H1 (cell line): ENCODE measurements at regions of chr1 and their contacts with region 1.

Region 1: DNA sequence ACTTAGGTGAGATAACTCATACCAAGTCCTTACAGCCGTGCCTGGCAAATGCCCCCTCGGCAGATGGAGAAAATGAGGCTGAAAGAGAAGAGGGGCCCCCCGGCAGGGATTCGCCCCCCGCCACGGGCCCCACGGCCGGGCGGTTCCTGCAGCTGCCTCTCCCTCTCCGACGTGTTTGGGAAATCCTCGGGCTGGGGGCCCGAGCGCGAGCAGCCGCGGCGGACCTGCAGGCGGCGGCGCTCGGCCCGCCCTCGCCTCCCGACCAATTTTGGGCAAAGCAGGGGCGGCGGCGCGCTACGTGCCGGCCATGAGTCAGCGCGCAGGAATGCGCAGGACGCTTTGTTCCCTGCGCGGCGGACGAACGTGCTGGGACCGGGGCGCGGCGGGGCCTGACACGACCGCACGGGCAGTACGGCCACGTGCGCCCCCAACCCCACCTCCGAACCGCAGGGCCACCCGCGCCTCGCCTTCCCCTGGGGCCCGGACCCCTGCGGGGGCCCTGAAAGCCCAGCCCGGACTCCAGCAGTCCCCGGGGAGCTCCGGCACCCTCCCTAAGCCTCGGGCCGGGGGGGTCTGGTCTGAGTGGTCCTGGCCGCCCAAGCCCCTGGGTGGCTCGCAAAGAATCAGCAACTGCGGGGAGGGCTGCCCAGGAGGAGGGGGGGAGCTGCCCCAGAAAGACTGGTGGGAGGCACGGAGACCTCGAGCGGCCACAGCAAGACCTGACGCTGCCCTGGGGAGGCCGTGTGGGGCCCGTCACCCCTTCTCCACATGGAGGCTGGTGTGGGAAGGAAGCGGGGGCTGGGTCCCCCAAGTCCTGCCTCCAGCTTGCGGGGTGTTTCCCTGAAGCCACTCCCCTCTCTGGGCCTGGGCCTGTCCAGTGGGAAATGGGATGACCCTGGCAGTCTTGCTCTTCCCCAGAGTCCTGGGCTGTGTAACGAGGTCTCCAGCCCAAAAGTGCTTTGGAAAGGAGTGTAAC is 11.9 kb upstream of the EDN2 start:
- DNase-seq: peak; percentile 69 to 88
- H3K4me3 ChIP-seq: peak overlapping the region; percentile 6 to 51 (median 24); a peak in 6 of 8 replicates
- H3K27ac ChIP-seq: peak overlapping the region; percentile 75; the same call in 1 of the 2 replicates
- H3K4me1 ChIP-seq: peaks cover 0 to 23% (median 17%) of the 10 kb centered on the region in 4 experiments; a peak in 6 of 7 replicates
- H3K27me3 ChIP-seq: peaks cover 0 to 13% (median 11%) of the 10 kb centered on the region in 4 experiments; a peak in 3 of 7 replicates
- CTCF ChIP-seq: 0 out of 4 replicates have a peak, but pooled peaks of 1 of the 3 experiments have one; percentile 5
- EP300 ChIP-seq: peak in 1 of 2 experiments; percentile 71; a peak in 1 of 3 replicates
- POLR2A ChIP-seq: no peak; a peak in 1 of 3 replicates
- RAD21 ChIP-seq: no peak

Region 2: DNA sequence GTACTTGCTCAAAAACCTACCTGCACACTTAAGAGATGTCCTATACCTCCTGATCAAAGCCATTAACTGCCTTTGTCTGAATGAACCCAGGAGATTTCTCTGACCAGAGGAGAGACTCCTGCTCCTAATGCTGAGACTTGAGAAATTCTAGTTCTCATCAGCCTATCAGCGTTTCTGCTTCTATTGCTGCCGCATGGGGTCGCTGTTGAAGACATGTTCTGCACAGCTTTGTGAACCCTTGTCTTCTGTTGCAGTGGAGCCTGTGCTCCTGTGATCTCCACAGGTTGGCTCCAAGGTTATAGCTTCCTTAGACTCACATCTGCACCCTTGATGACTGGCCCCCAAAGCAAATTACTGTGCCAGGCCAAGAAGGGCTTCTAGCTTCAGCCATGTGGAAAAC is 52.1 kb before region 1 on chr1:
- CTCF ChIA-PET with region 1: interaction called, 10 read pairs
- POLR2A ChIA-PET with region 1: no interaction called
- DNase-seq: no peak
- H3K4me3 ChIP-seq: no peak overlapping the region
- H3K27ac ChIP-seq: no peak overlapping the region
- H3K4me1 ChIP-seq: no peaks in the 10 kb centered on the region; a peak in 2 of 7 replicates
- H3K27me3 ChIP-seq: no peaks in the 10 kb centered on the region
- CTCF ChIP-seq: peak; percentile 26 to 63 (median 48)
- EP300 ChIP-seq: no peak
- POLR2A ChIP-seq: no peak
- RAD21 ChIP-seq: peak in 1 of 2 experiments; percentile 44; a peak in 2 of 4 replicates